Esophagus muscularis mucosa (tissue), 4 donors: ENCODE measurements at regions of chr1 and their contacts with region 1.

Region 1: DNA sequence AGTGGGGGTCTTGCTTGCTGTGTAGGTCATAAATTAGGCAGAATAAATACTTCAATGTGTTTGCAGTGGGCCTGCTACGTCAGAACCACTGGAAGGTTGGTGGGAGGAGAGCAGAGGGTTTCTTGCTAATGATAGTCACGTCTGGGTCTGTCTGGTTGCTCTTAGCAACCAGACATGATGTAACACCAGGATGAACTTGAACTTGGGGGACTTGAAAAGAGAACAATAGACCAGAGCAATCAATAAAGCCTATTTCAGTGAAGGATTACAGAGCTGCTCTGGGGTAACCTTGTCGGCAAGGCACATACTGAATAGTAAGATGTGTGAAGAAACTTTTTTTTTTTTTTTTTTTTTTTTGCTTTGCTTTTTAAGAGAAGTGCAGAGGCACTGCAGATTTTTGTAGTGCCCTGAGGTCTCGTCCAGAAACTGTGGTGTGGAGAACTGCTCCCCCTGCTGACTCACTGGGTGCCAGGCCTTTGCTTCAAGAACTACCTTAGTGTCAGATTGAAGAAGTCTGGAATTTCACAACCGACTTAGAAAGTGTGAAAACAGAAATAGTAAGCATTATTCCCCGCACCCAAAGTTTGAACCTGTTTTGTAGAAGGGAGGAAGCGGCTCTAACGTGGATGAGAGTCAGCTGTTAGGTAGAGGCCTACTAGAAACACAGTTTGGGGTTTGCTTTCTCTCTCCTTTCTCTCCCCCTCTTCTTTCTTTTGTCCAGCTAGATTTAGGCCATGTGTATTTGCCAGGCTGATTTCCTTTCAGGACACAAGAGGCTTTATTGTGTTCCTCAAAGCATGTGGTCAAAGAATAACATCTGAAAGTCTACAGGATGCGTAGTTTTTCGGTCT is 271.6 kb downstream of the TM2D1 start:
- DNase-seq: peak; percentile 97
- H3K4me3 ChIP-seq: no peak overlapping the region
- H3K27ac ChIP-seq: peak overlapping the region; percentile 70 to 80 (median 72)
- H3K4me1 ChIP-seq: peaks cover 59 to 63% (median 62%) of the 10 kb centered on the region in 4 donors
- H3K27me3 ChIP-seq: no peaks in the 10 kb centered on the region
- CTCF ChIP-seq: peak; percentile 74 to 86 (median 83)
- EP300 ChIP-seq: no peak
- POLR2A ChIP-seq: no peak

Region 2: DNA sequence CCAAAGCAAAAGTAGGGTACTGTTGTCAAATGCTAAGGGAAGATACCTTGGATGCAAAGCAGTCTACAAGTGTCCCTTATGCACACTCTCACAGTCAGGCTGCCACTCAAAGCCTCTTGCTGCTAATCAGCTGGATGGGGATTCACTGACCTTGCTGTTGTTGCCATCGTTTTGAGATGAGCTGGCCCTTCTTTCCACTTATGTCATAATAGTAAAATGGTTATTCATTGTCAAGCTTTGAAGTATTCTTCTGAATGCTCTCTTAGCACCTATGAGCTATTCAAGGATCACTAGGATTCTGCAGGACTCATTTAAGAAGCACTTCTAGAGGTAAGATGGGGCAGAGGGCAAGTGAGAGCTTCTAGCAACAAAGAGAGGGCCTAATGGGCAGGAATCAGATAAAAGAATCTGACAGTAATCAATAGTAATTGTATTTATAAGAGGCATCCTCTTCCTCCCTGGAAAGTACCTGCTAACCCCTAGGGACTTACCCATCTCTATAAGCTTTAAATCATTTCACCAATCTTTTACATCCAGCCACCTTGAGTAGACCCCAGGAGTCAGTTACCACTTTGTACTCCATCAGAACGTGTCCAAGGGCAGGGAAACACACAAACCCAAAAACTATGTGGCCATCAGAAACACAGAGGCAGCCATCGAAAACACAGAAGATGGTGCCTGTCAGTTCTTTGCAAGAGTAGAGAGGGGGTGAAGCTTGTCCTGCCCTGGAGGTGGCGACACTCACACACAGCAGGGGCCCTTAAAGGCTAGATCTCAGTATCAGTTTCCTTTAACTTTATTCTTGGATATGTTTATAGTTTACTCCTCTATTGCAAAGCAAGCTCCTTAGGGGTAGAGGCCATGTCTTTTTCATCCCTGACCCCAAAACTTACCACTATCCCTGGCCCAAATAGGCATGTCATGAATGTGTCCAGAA is 474.6 kb before region 1 on chr1:
- intact Hi-C with region 1: loop called (anchors 10 kb)
- DNase-seq: no peak
- H3K4me3 ChIP-seq: no peak overlapping the region
- H3K27ac ChIP-seq: no peak overlapping the region
- H3K4me1 ChIP-seq: peaks cover 0 to 31% (median 21%) of the 10 kb centered on the region in 4 donors
- H3K27me3 ChIP-seq: no peaks in the 10 kb centered on the region
- CTCF ChIP-seq: peak in 2 of 3 experiments; percentile 17 to 55
- EP300 ChIP-seq: no peak
- POLR2A ChIP-seq: no peak

Region 3: DNA sequence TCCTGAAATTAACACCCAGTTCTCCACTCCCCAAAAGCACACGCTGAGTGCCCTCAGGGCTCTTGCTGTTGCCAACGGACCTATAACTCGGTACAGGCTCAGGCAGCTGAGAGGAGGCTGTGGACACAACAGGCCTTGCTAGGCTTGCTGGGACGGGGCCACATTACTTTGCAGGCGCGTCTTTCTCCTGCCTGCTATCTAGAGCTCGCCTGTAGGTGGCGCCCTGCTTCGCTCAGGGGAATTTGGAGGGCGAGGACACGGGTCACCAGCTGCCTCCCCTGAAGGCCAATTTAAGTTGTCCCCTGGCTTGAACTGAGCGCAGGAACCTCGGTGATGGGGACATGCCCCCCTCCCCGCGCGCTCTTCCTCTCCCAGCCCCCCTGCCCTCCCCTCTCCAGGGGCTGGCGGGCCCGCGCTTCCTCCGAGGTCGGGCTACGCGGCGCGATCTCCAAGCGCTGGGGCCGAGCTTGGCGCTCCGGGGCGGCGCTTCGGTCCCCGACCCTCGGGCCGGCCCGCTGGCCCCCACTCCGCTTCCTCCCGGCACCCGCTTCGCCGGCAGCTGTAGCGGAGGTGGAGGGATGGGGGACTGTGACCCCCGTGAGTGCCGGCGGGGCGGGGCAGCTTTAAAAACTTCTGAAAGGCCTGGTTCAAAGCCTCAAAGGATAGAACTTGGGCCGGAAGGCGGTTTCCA is 403.3 kb before region 1 on chr1:
- intact Hi-C with region 1: loop called (anchors 5 kb)
- DNase-seq: peak; percentile 99
- H3K4me3 ChIP-seq: peak overlapping the region; percentile 74 to 91 (median 84)
- H3K27ac ChIP-seq: peak overlapping the region; percentile 93 to 99 (median 98)
- H3K4me1 ChIP-seq: peaks cover 31 to 47% (median 47%) of the 10 kb centered on the region in 4 donors
- H3K27me3 ChIP-seq: no peaks in the 10 kb centered on the region
- CTCF ChIP-seq: peak; percentile 95 to 99 (median 99)
- EP300 ChIP-seq: no peak
- POLR2A ChIP-seq: no peak

Region 4: DNA sequence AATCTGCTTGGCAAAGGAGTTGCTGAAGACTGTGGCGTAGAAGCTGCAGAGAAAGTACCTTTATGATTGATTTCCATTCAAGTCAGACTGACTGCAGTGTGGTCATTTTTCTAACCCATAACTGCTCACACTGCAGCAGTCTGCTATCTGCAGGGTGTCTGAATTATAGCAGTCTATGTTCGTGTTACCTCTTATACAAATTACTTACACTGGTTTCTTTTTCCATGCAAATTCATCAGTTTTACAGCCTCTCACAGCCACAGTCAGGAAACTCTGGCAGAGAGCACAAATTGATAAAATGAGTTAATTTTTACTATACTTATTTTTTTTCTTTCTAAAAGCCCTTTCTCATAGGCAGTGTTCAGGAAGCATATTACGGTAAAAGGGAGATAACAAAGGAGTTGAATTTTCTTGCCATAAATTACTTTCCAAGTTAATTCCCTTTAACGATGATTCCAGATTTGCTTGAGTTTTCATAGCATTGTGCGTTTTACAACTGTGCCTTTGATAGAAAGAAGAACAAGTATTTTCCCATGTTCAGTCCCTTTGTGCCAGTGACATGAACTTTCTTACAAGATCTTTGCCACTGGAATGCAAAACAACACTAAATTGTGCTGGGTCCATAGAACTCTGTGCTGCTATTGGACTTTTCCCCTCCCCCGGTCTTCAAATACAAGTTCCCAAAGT is 109.5 kb before region 1 on chr1:
- intact Hi-C with region 1: loop called (anchors 5 kb)
- DNase-seq: no peak
- H3K4me3 ChIP-seq: no peak overlapping the region
- H3K27ac ChIP-seq: peak overlapping the region in 3 of 4 donors; percentile 5 to 41 (median 14)
- H3K4me1 ChIP-seq: peaks cover 20 to 33% (median 26%) of the 10 kb centered on the region in 4 donors
- H3K27me3 ChIP-seq: no peaks in the 10 kb centered on the region
- CTCF ChIP-seq: no peak
- EP300 ChIP-seq: no peak
- POLR2A ChIP-seq: no peak

Region 5: DNA sequence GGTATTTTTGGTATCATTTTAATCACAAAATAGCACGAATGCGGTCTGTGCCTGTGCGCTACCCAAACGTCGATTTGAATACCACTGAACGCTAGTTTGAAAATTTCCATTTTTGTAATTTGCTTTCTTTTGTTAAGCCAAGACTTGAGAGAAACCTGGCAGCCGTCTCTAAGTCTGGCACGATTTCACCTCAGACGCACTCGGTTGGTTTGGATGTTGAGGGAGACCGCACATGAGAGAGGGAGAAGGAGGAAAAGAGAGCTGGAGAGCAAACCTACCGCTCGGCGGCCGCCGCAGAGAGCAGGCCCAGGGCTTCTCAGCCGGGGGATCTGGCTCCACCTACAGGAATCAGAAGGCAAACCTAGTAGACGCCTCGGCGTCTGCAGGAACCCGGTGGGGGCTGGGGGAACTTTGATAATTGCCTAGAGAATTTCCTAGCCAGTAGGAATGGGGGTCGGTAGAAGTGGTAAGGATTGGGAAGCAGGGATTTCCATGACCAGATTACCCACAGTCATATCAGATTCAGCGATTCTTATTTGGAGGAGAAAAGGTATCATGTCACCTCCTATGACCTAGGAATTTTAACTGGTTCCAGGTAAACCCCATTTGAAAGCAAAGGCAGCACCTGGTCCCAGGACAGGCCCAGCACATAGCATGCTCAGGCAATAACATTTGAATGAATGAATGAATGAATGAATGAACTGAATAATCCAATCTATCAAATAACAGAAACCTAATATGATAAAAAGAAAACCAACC is 188.4 kb after region 1 on chr1:
- intact Hi-C with region 1: loop called (anchors 5 kb)
- DNase-seq: peak; percentile 95
- H3K4me3 ChIP-seq: peak overlapping the region; percentile 17 to 47 (median 34)
- H3K27ac ChIP-seq: peak overlapping the region; percentile 76 to 85 (median 79)
- H3K4me1 ChIP-seq: peaks cover 15 to 60% (median 51%) of the 10 kb centered on the region in 4 donors
- H3K27me3 ChIP-seq: peaks cover 0 to 3% (median 0%) of the 10 kb centered on the region in 4 donors
- CTCF ChIP-seq: peak; percentile 70 to 84 (median 70)
- EP300 ChIP-seq: no peak
- POLR2A ChIP-seq: no peak

Region 6: DNA sequence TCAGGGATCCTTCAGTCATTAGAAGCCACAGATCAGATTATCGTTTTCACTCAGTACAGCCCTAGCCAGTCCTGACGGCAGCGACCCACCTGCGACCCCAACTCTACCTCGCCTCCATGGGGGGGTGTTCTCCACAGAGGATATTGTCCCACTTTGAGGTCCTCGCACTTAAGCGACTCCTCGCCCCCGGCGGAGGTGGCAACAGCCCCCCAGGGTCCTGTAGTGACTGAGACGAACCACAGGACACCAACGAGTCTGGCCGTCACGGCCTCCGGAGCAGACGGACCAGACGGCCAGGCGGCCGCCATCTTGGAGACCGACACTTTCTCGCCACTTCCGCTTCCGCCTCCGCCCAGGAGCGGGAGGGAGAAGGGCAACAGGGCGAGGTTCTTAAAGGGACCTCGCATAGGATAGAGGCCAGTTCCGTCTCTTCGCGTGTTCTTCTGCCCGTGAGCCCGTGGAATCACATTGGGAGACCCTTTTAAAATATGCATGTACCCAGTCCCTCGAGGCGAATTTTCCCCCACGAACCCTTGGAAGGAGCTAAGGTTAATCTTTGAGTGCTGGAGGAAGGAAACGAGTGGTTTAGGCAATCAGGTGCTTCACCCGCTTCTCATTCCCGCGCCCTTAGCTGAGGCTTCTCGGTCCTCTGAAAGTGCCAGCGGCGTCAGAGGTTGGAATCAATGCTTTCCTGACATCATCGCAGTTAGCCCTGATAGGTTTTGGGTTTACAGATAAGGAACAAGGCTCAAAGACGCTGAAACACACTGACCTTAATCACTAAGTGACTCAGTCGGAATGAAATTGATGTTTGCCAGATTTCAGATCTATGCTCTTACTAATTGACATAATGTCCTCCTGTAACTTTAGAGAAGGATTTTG is 271.7 kb after region 1 on chr1 and contains the start of gene TM2D1:
- intact Hi-C with region 1: loop called (anchors 10 kb)
- DNase-seq: peak; percentile 96
- H3K4me3 ChIP-seq: peak within 1 kb of the TSS; percentile 74 to 96 (median 90)
- H3K27ac ChIP-seq: peak within 1 kb of the TSS; percentile 86 to 91 (median 90)
- H3K4me1 ChIP-seq: peaks cover 15 to 38% (median 30%) of the 10 kb centered on the region in 4 donors
- H3K27me3 ChIP-seq: no peaks in the 10 kb centered on the region
- CTCF ChIP-seq: no peak
- EP300 ChIP-seq: no peak
- POLR2A ChIP-seq: peak; percentile 53
- total RNA-seq, gene TM2D1: 59.6 to 73.5 (median 66.3) TPM